Sigmoid colon (tissue), 7 donors: ENCODE measurements at regions of chr2 and their contacts with region 1.

Region 1: DNA sequence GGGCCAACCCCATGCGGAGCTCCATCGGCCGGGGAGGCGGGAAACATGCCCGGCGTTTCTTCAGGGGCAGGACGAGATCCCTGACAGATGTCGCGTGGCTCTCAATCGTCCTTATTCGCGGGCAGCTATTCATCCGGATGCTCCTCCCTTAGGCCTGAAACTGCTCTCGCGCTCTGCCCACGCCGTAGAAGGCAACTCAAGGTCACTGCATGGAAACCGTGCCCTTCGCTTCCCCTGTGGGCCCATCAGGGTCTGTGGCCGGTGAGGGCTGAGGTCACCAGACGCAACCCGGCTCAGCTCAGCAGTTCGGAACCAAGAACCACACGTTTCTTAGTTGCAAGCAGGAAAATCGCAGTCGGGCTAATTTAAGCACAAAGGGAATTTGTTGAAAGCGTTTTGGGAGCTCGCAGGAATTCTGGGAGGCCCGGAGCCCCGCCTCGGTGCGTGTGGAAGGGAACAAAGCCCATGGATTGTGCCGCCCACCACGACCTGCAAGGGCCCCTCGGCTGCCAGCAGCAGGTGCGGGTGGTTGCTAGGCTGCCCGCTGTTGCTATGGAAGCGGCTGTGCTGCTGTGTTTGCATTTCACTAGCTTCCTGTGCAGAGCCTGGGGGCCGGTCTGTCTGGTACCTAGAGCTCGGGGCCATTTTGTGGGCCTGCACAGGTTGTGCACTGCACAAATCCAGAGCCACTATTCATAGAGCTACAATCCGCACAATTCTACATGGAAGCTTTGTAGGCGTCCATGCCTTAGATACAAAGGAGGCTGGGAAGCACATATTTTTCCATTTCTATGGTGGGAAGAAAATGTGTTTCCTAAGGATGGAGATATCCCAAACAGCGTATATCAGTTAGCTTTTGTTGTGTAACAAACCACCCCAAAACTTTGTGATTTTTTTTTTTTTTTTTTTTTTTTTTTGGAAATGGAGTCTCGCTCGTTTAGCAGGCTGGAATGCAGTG is 6.0 kb upstream of the ALLC start:
- DNase-seq: no peak
- H3K4me3 ChIP-seq: peak overlapping the region in 3 of 4 donors; percentile 28 to 42 (median 41)
- H3K27ac ChIP-seq: peak overlapping the region; percentile 74 to 84 (median 79)
- H3K4me1 ChIP-seq: peaks cover 0 to 19% (median 14%) of the 10 kb centered on the region in 4 donors
- H3K27me3 ChIP-seq: no peaks in the 10 kb centered on the region
- CTCF ChIP-seq: no peak
- EP300 ChIP-seq: no peak
- POLR2A ChIP-seq: no peak

Region 2: DNA sequence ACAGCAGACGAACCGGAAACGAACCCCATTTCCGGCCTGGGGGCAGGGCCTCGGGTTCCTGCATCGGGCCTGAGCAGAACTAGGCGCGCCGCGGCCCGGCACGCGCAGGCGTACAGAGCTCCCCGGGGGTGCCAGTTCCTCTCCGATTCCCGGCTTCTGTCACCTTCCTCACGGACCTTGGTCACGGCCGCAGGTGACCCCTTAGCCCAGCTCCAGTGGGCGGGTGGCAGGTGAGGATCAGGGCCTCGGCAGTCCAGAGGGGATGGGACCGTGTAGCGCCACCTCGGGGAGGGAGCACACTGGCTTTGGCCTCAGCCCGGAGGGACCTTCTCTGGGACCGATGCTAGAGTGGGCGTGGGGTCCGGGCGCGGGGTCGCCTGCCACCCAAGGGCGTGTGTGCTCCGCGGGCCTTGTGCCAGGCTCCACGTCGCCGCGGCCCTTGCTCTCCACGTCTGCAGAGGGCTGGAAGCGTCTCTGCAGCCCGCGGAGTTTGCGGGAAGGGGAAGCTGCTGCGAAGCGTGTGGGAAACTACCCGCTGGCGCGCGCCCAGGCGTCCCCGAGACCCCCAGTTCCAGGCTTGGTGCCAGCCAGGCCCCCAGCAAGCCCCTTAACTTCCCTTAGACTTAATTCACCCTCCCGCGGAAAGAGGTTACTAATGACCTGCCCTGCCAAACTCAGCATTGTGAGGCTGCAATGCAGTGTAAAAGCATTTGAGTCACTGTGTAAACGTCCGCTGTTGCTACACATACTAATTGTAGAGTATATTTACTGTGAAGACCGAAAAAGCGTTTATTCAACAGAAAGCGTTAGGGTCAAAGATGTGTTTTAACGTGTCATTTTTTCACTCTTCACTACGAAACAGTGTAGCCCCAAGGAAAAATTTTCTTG is 272.1 kb before region 1 on chr2 and contains the start of gene TRAPPC12:
- intact Hi-C with region 1: loop called (anchors 5 kb)
- DNase-seq: peak; percentile 95
- H3K4me3 ChIP-seq: peak within 1 kb of the TSS; percentile 66 to 81 (median 72)
- H3K27ac ChIP-seq: peak within 1 kb of the TSS; percentile 88 to 94 (median 92)
- H3K4me1 ChIP-seq: peaks cover 0 to 37% (median 30%) of the 10 kb centered on the region in 4 donors
- H3K27me3 ChIP-seq: no peaks in the 10 kb centered on the region
- CTCF ChIP-seq: peak in 2 of 4 experiments; percentile 20 to 21
- EP300 ChIP-seq: no peak
- POLR2A ChIP-seq: peak; percentile 71 to 76
- total RNA-seq, gene TRAPPC12: 48.5 to 79.5 (median 63.4) TPM

Region 3: GRCh38 chr2:3423492-3424175 is 228.3 kb before region 1 on chr2:
- intact Hi-C with region 1: loop called (anchors 2 kb)
- DNase-seq: no peak
- H3K4me3 ChIP-seq: no peak overlapping the region
- H3K27ac ChIP-seq: no peak overlapping the region
- H3K4me1 ChIP-seq: peaks cover 0 to 6% (median 0%) of the 10 kb centered on the region in 4 donors
- H3K27me3 ChIP-seq: no peaks in the 10 kb centered on the region
- CTCF ChIP-seq: peak; percentile 73 to 98 (median 89)
- EP300 ChIP-seq: no peak
- POLR2A ChIP-seq: no peak

Region 4: GRCh38 chr2:5125017-5125730 is 1473.2 kb after region 1 on chr2:
- intact Hi-C with region 1: no loop called
- DNase-seq: no peak
- H3K4me3 ChIP-seq: no peak overlapping the region
- H3K27ac ChIP-seq: no peak overlapping the region
- H3K4me1 ChIP-seq: peaks cover 0 to 23% (median 6%) of the 10 kb centered on the region in 4 donors
- H3K27me3 ChIP-seq: no peaks in the 10 kb centered on the region
- CTCF ChIP-seq: no peak
- EP300 ChIP-seq: no peak
- POLR2A ChIP-seq: no peak